ENCODE measurements at regions of chr2 and their contacts with region 1.

Region 1: DNA sequence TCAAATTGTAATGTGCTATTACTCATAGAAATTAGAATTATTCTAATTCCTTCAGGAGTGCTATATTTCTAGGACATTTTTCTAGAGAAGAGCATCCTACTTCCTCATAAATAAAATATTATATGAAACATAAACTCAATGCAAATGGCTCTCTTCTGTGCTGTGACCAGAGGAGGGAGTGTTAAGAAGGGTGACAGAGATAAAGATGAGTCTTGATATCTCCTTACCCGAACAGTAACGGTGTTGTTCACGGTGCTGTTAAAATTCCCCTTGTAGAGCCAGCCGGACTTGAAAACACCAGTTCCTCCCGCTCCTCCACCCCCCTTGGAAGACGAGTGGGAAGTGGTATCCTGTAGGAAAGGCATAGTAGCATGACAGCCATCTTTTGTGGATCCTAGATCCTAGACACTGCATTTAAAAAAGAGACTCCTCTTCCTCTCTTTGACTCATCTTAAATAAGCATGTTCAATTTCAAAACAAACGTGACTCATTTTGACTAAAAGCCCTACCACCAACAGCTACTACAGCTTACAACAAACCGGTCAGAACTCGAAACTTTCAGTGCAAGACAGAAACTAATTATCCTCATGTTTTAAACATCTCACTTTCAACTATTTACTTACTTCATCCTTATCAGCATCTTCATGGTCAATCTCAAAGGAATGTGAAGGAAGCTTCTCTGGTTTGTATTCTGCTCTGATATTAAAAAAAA is 156.3 kb downstream of the DOCK10 start:
- DNase-seq: no peak
- ATAC-seq: peak; percentile 81
- H3K4me3 Mint-ChIP-seq: peak overlapping the region; percentile 24
- H3K27ac Mint-ChIP-seq: peak overlapping the region; percentile 76
- H3K4me1 Mint-ChIP-seq: peaks cover 65% of the 10 kb centered on the region
- H3K27me3 Mint-ChIP-seq: no peaks in the 10 kb centered on the region

Region 2: GRCh38 chr2:224666951-224667553 is 218.9 kb before region 1 on chr2:
- CTCF ChIA-PET with region 1: no interaction called
- POLR2A ChIA-PET with region 1: no interaction called
- intact Hi-C with region 1: no loop called
- DNase-seq: no peak
- ATAC-seq: no peak
- H3K4me3 Mint-ChIP-seq: no peak overlapping the region
- H3K27ac Mint-ChIP-seq: no peak overlapping the region
- H3K4me1 Mint-ChIP-seq: peaks cover 2% of the 10 kb centered on the region
- H3K27me3 Mint-ChIP-seq: no peaks in the 10 kb centered on the region

Region 3: DNA sequence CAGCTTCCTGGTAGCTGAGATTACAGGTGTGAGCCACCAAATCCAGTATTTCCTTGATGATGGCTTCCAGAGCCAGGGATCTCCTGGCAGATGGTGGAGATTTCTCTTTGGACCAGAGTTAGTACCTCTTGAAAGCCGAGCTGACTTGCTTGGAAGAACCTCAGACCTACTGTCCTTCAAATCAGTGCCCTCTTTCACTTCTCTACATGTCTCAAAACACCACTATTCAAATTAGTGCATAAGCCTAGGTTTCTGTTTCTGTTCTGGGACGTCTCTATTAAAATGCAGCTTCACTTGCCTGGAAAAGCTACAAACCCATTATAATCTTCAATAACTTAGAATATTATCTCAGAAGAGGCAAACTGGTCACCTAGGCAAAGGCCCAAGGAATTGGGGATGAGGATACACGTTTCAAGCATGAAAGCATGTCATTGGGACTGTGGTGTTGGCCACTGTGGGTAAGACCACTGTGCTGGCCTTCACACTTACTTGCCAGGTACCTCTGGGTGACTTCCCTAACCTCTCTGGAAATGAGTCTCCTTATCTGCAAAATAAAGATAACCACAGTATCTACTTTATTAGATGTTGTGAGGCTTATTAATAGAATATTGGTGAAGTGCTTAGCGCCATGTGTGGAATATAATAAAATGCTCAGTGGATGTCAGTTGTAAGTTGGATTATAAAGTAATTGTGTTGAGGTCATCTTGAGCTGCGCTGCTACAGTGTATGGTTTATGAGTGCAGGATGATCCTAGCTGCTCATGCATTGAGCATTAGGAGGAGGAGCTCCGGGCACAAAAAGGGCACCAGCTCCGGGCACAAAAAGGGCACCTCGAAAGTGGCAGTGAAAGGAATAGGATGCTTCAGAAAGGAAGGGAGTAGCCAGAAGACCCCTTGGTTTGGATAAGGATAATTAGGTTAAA is 71.8 kb after region 1 on chr2:
- CTCF ChIA-PET with region 1: no interaction called
- POLR2A ChIA-PET with region 1: no interaction called
- intact Hi-C with region 1: no loop called
- DNase-seq: no peak
- ATAC-seq: peak; percentile 74
- H3K4me3 Mint-ChIP-seq: no peak overlapping the region
- H3K27ac Mint-ChIP-seq: peak overlapping the region; percentile 56
- H3K4me1 Mint-ChIP-seq: peaks cover 78% of the 10 kb centered on the region
- H3K27me3 Mint-ChIP-seq: no peaks in the 10 kb centered on the region

Region 4: GRCh38 chr2:225244949-225245348 is 359.0 kb after region 1 on chr2:
- CTCF ChIA-PET with region 1: no interaction called
- POLR2A ChIA-PET with region 1: interaction called, 12 read pairs
- intact Hi-C with region 1: no loop called
- DNase-seq: no peak
- ATAC-seq: no peak
- H3K4me3 Mint-ChIP-seq: no peak overlapping the region
- H3K27ac Mint-ChIP-seq: no peak overlapping the region
- H3K4me1 Mint-ChIP-seq: no peaks in the 10 kb centered on the region
- H3K27me3 Mint-ChIP-seq: peaks cover 7% of the 10 kb centered on the region

Region 5: GRCh38 chr2:226002438-226002837 is 1116.4 kb after region 1 on chr2:
- CTCF ChIA-PET with region 1: no interaction called
- POLR2A ChIA-PET with region 1: no interaction called
- intact Hi-C with region 1: no loop called
- DNase-seq: no peak
- ATAC-seq: peak; percentile 49
- H3K4me3 Mint-ChIP-seq: no peak overlapping the region
- H3K27ac Mint-ChIP-seq: no peak overlapping the region
- H3K4me1 Mint-ChIP-seq: peaks cover 2% of the 10 kb centered on the region
- H3K27me3 Mint-ChIP-seq: no peaks in the 10 kb centered on the region

Measured in activated CD4-positive, alpha-beta T cell treated with anti-CD3 and anti-CD28 coated beads for 36 hours (primary cell).